PC-3 (cell line): ENCODE measurements at regions of chr15 and their contacts with region 1.

Region 1: GRCh38 chr15:48810414-48811317 is at the start of gene CEP152:
- DNase-seq: peak; percentile 98
- ATAC-seq: peak; percentile 96
- H3K4me3 ChIP-seq: peak within 1 kb of the TSS; percentile 83
- H3K27ac ChIP-seq: peak within 1 kb of the TSS; percentile 68
- H3K4me1 ChIP-seq: peaks cover 15% of the 10 kb centered on the region
- H3K27me3 ChIP-seq: no peaks in the 10 kb centered on the region
- CTCF ChIP-seq: no peak
- total RNA-seq, gene CEP152: 7.5 and 8.2 TPM in 2 replicates

Region 2: DNA sequence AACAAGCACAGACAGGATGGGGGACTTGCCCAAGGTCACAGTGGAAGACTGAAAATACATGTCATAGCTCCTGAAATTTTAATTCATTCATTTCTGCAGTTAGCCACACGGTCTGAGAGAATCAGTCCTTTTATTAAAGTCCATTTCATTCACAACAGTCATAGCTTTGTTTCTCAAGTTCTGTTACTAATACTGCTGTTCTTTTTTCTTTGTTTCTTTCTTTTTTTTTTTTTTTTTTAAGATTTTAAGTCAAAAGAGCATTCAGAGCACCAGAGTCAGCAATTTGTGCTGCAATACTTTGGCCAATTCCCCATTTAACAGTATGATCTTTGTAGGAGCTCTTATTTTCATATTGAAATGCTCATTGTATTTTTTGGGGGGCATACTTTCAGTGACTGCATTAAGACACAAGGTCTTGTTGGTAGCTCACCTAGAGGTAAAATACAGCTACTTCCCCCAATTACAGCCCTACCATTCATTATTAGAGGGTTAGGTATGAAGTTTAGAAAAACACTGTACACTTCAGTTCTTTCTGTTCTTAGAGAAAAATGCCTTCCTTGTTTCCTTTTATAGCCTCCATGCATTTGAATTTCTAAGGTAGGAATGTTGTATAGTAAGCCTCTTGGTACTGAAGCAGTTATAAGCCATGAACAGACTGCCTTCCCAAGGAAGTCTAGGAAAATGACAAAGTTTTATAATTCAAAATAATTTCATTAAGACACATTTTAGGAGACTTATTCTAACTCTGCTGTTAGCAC is 368.9 kb after region 1 on chr15:
- CTCF ChIA-PET with region 1: no interaction called
- POLR2A ChIA-PET with region 1: interaction called, 11 read pairs
- intact Hi-C with region 1: no loop called
- DNase-seq: no peak
- ATAC-seq: no peak
- H3K4me3 ChIP-seq: no peak overlapping the region
- H3K27ac ChIP-seq: no peak overlapping the region
- H3K4me1 ChIP-seq: no peaks in the 10 kb centered on the region
- H3K27me3 ChIP-seq: no peaks in the 10 kb centered on the region
- CTCF ChIP-seq: no peak